GM10248 (cell line): ENCODE measurements at regions of chrX and their contacts with region 1.

Region 1: GRCh38 chrX:153947009-153947769 is 2.7 kb upstream of the RENBP start:
- DNase-seq: peak; percentile 86
- CTCF ChIP-seq: peak; percentile 68

Region 2: GRCh38 chrX:153763989-153764755 is 183.0 kb before region 1 on chrX and contains the start of gene PLXNB3:
- CTCF ChIA-PET with region 1: interaction called, 22 read pairs
- POLR2A ChIA-PET with region 1: no interaction called
- DNase-seq: peak; percentile 82
- CTCF ChIP-seq: peak; percentile 72

Region 3: DNA sequence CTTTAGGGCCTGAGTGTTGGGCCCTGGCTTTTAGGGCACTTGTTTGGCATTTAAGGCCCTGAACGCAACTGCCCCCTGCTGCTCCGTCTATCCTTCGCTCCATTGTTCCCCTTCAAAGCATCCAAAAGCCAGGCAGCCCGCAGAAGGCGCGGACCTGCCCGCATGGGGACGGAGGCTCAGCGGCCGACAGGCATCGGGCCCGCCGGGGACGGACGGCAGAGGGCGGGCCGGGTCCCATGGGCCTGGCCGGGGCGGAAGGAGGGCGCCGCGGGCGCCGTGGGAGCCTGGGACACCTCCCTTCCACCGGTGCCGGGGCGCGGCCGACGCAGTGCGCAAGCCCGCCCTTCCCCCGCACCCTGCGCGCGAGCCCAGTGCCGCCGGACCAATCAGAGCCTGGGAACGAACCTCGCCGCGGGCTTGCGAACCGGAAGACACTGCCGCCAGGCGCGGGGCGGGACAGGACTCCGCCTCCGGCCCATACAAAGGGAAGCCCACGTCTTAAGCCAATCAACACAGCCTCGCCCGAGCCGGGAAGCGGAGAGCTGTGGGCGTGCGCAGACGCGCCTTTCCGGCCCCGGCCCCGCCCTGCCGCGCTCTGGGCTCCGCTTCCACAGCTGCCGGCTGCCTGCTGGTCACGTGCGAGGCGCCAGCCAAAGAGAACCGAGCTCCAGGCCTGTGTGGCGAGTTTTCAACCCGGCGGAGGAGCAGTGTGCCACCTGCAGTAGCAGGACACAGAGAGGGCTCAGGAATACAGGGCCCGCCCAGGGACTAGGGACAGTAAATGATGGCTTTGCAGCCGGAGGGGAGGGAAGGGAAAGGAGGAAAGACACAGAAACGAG is 19.0 kb before region 1 on chrX:
- CTCF ChIA-PET with region 1: interaction called, 187 read pairs
- POLR2A ChIA-PET with region 1: interaction called, 3 read pairs
- DNase-seq: peak; percentile 97
- CTCF ChIP-seq: no peak

Region 4: DNA sequence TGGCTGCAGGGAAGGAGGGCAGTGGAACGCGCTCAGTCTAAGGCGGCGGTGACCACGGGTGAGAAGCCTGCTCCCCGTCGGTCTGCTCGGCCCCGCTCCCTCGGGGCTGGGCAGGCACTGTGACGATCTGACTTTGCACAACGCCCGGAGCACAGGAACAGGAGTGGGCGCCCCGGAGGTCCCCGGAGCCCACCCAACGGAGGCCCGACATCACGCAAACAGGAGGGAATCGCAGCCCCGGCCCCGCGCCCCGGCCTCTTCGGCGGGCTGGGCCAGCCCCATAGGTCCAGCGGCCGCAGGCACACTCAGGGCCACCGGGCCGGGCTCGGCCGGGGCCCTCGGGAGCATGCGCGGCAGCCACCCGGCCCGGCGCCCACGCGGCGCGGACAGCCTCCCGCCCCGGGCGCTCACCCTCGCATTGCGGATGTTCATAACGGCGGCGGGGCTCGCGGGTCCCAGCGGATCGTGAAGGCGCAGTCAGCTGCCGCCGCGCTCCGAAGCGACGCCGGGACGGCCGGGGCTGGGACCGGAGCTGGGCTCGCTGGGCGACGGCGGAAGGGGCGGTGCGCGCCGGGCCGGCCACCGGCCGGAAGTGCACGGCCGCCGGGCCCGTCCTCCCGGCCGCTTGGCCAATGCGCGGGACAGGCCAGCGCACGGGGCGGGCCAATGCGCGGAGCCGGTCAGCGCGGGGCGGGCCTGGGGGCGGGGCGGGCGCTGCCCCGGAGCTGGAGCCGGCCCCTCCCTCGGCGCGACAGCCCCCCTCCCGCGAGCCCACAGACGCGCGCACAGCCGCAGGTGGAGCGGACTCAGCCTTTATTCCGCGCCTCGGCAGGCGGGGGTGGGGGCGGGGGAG is 12.5 kb before region 1 on chrX and contains the start of gene NAA10:
- CTCF ChIA-PET with region 1: interaction called, 187 read pairs
- POLR2A ChIA-PET with region 1: interaction called, 3 read pairs
- DNase-seq: peak; percentile 95
- CTCF ChIP-seq: no peak

Region 5: DNA sequence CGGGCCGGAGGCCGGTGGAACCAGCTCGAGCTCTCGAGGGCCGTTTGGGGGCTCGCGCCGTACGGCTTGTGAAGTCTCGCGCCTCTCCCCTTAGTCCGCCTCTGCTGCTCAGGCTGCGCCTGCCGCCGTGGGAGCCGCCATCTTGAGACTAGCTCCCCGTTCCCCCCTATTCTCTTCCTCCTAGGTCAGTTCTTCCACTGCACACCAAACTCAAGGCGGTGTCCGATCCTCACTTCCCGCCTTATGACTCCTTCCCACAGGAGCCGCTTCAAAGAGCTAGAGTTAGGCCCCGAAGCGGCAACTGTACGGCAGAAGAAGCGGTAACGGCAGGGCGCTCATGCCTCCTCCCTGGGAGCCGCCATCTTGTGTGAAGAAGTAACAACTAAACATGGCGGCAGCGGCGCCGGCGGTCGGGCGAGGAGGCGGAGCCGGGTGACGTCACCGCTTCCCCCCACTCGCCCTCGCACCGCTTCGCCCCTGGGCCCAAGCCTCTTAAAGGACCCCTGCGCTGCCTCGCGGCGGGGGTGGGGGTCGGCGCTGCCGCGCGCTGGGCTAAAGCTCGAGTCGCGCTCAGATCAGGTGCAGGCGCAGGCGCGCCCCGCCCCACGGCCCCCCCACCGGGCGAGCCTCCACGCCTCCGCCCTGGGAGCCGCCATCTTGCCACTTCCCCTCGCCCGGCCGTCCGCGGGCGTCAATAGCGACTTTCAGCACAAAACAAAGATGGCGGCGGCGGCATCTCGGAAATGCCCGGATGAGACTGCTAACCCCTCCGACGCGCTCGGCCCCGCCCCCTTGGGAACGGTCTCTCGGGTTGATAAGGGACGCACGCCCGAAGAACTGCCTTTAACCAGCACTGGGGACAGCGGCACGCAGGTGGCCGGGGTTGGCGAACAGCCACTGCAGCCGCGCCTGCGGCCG is 24.5 kb after region 1 on chrX and contains the start of gene HCFC1:
- CTCF ChIA-PET with region 1: interaction called, 137 read pairs
- POLR2A ChIA-PET with region 1: interaction called, 3 read pairs
- DNase-seq: peak; percentile 84
- CTCF ChIP-seq: no peak